Activated CD4-positive, alpha-beta T cell treated with anti-CD3 and anti-CD28 coated beads, Interleukin-2, amount 10 ng/mL, durations not matched to agents 7 days and 5 days (primary cell): ENCODE measurements at regions of chr15 and their contacts with region 1.

Region 1: GRCh38 chr15:57306161-57306943 is 70.0 kb upstream of the CGNL1 start:
- DNase-seq: peak; percentile 83
- H3K4me3 Mint-ChIP-seq: peak overlapping the region; percentile 49
- H3K27ac Mint-ChIP-seq: no peak overlapping the region
- H3K4me1 Mint-ChIP-seq: peaks cover 3% of the 10 kb centered on the region
- H3K27me3 Mint-ChIP-seq: peaks cover 6% of the 10 kb centered on the region

Region 2: GRCh38 chr15:57146506-57147201 is 159.7 kb before region 1 on chr15:
- CTCF ChIA-PET with region 1: interaction called, 10 read pairs
- POLR2A ChIA-PET with region 1: no interaction called
- DNase-seq: peak; percentile 41
- H3K4me3 Mint-ChIP-seq: no peak overlapping the region
- H3K27ac Mint-ChIP-seq: no peak overlapping the region
- H3K4me1 Mint-ChIP-seq: peaks cover 4% of the 10 kb centered on the region
- H3K27me3 Mint-ChIP-seq: no peaks in the 10 kb centered on the region